MCF 10A (cell line): ENCODE measurements at regions of chr2 and their contacts with region 1.

Region 1: DNA sequence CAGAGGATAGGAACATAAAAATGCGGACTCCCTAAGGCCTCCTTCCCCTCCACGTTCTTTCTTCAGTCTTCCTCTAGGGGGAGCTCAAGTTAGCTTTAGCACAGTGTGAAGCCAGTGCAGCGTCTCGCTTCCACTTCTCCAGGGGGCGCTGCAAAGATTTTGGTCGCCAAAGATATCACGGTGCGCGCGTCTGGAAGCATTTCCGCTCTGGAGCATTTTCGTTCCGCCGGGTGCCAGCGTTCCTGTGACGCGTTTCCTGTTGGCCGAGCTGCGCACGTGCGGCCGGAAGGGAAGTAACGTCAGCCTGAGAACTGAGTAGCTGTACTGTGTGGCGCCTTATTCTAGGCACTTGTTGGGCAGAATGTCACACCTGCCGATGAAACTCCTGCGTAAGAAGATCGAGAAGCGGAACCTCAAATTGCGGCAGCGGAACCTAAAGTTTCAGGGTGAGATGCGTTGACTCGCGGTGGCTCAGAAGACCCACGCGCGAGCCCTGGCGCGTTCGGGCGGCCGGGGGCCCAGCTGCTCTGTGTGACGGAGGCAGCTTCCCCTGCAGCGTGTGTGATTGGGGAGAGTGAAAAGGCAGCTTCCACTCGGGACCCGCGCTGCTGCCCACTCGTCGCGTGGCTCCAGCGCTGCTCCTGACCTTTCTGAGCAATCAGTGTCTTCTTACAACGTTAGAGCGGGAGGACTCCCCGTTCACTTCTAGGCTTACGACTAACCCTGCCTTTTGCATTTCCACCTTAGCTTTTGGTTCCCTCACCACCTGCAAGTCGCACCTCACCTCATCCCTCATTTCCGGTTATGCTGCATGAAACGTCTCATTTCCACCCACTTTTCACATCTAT is at the start of gene DDX18:
- DNase-seq: peak; percentile 99
- H3K4me3 Mint-ChIP-seq: peak within 1 kb of the TSS; percentile 87
- H3K27ac Mint-ChIP-seq: peak within 1 kb of the TSS; percentile 95
- H3K4me1 Mint-ChIP-seq: no peaks in the 10 kb centered on the region
- H3K27me3 Mint-ChIP-seq: peaks cover 10% of the 10 kb centered on the region
- CTCF ChIP-seq: peak; percentile 97
- total RNA-seq, gene DDX18: 88.7 and 101 TPM in 2 replicates

Region 2: DNA sequence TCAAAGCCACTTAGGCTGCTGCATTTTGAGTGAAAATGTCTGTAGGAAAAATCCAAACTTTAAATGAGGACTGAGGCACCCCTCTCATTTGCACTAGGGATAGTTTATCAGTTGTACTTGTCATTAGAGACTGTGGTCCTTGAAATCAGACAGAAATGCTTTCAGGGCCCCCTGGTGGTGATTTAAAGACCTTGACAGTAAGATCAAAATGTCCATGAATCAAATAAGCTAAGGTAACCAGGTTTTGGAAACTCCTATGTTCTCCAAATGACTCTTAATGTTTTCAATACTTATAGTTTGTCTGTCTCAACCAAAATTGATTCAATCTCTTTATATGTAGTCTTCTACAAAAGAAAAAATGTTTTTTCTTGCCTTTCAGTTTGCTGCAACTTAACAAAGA is 28.9 kb before region 1 on chr2:
- CTCF ChIA-PET with region 1: interaction called, 19 read pairs
- POLR2A ChIA-PET with region 1: no interaction called
- intact Hi-C with region 1: no loop called
- DNase-seq: peak; percentile 72
- H3K4me3 Mint-ChIP-seq: no peak overlapping the region
- H3K27ac Mint-ChIP-seq: no peak overlapping the region
- H3K4me1 Mint-ChIP-seq: no peaks in the 10 kb centered on the region
- H3K27me3 Mint-ChIP-seq: no peaks in the 10 kb centered on the region
- CTCF ChIP-seq: peak; percentile 64

Region 3: GRCh38 chr2:117835990-117836760 is 21.5 kb after region 1 on chr2:
- CTCF ChIA-PET with region 1: interaction called, 19 read pairs
- POLR2A ChIA-PET with region 1: no interaction called
- intact Hi-C with region 1: no loop called
- DNase-seq: peak; percentile 43
- H3K4me3 Mint-ChIP-seq: no peak overlapping the region
- H3K27ac Mint-ChIP-seq: no peak overlapping the region
- H3K4me1 Mint-ChIP-seq: no peaks in the 10 kb centered on the region
- H3K27me3 Mint-ChIP-seq: no peaks in the 10 kb centered on the region
- CTCF ChIP-seq: peak; percentile 54

Region 4: DNA sequence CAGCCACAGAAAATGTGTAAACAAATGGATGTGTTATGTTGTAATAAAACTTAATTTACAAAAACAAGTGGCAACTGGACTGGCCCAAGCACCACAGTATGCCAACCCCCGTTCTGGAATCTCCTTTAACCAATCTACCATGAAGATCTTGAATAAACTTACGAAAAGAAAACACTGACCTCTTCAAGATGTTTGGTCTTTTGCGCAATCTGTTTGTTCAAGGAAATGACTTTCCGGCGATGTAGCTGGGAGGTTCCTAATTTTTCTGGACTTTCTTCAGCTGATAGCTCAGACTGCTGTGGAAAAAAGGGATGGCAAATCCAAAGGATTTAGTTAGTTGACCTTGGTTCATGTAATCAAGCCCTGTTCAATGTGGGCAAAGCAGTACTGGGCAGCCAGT is 143.5 kb after region 1 on chr2:
- CTCF ChIA-PET with region 1: no interaction called
- POLR2A ChIA-PET with region 1: no interaction called
- intact Hi-C with region 1: loop called (anchors 1 kb)
- DNase-seq: peak; percentile 86
- H3K4me3 Mint-ChIP-seq: no peak overlapping the region
- H3K27ac Mint-ChIP-seq: peak overlapping the region; percentile 76
- H3K4me1 Mint-ChIP-seq: peaks cover 22% of the 10 kb centered on the region
- H3K27me3 Mint-ChIP-seq: no peaks in the 10 kb centered on the region
- CTCF ChIP-seq: no peak